ENCODE measurements at regions of chr5 and their contacts with region 1.

Region 1: GRCh38 chr5:39256477-39257235 is 37.3 kb upstream of the FYB1 start:
- DNase-seq: peak; percentile 89 to 96 (median 94)
- H3K4me3 ChIP-seq: peak overlapping the region in 2 of 3 experiments; percentile 66 to 70
- H3K4me3 Mint-ChIP-seq: peak overlapping the region in 1 of 2 donors; percentile 80
- H3K27ac ChIP-seq: peak overlapping the region; percentile 36 to 93
- H3K27ac Mint-ChIP-seq: peak overlapping the region; percentile 93 to 99 (median 95)
- H3K4me1 ChIP-seq: peaks cover 50 to 74% of the 10 kb centered on the region in 2 donors
- H3K4me1 Mint-ChIP-seq: peaks cover 74% of the 10 kb centered on the region
- H3K27me3 ChIP-seq: no peaks in the 10 kb centered on the region
- H3K27me3 Mint-ChIP-seq: no peaks in the 10 kb centered on the region
- CTCF ChIP-seq: no peak

Region 2: DNA sequence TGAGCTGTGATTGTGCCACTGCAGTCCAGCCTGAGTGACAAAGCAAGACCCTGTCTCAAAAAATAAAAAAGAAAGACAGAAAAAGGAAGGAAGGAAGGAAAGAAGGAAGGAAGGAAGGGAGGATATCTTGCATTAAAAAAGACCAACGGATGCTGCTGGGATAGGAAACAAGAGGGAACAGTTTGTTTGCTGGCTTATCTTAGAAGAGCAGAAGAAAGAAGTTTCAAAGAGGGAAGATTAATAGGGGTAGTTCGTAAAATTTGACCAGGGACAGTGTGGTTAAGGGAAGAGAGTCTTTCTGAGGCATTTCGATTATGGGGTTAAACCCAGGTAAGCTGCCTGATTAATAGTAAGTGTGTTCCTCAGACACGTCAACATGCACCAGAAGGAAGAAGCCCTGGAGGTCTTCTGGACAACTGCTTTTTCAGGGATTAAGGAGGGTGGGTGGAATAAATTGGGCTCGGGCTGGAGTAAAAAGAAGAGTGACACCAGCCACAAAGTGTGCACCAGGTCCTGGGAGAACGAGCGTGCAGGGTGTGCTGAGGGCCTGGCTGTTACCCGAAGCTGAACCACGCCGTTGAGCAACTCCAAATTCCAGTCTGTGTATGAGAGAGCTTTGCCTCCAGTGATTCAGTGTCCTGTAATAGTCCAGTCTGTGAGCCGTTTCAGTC is 62.1 kb before region 1 on chr5:
- intact Hi-C with region 1: no loop called
- DNase-seq: no peak
- H3K4me3 ChIP-seq: no peak overlapping the region
- H3K4me3 Mint-ChIP-seq: peak overlapping the region in 1 of 2 donors; percentile 18
- H3K27ac ChIP-seq: peak overlapping the region in 1 of 2 donors; percentile 63
- H3K27ac Mint-ChIP-seq: peak overlapping the region; percentile 37 to 92 (median 80)
- H3K4me1 ChIP-seq: peaks cover 74 to 86% of the 10 kb centered on the region in 2 donors
- H3K4me1 Mint-ChIP-seq: peaks cover 87% of the 10 kb centered on the region
- H3K27me3 ChIP-seq: no peaks in the 10 kb centered on the region
- H3K27me3 Mint-ChIP-seq: peaks cover 0 to 2% (median 0%) of the 10 kb centered on the region in 3 donors
- CTCF ChIP-seq: no peak

Region 3: DNA sequence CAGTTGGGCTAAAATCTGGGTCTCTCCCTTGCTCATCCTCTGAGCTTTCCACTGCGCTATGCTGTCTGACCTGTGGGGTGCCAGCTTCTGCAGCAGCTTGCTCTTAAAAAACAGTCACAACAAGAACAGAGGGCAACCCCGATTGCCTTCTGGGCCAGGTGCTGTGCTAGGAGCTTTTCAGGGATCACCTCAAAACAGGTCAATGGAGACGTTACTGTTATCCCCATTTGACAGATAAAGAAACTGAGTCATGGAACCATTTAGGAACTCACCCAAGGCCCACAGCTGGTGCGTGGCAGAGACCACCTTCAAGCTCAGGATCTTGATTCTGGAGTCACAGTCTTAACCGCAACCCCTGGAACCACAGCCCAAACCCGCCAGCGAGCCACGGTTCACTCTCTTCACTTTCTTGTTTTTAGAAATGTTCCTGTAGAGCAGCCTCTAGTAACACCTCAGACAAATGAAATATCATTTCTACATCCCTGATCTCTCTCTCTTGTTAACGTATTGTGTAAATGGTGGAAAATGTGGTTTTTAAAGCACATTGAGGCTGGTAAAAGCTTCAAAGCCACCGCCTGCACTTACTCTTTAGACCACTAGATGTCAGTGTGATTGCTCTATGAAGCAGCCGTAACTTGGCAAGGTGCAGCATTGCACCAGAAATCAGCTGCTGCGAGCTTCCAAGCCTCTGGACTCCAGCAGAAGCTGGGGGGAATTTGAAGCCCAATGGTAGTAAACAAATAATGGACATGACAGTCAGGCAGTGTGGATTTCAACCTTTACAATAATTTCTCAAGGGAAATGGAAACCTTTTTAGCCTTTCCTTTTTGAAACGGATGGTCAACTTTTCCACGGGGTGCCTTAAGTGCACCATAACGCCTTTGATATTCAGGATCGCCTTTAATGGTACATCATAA is 39.0 kb before region 1 on chr5:
- intact Hi-C with region 1: loop called (anchors 5 kb)
- DNase-seq: peak; percentile 60 to 83 (median 72)
- H3K4me3 ChIP-seq: peak overlapping the region; percentile 69 to 88 (median 81)
- H3K4me3 Mint-ChIP-seq: peak overlapping the region; percentile 77 to 98
- H3K27ac ChIP-seq: peak overlapping the region in 1 of 2 donors; percentile 86
- H3K27ac Mint-ChIP-seq: peak overlapping the region; percentile 29 to 91 (median 82)
- H3K4me1 ChIP-seq: peaks cover 85 to 87% of the 10 kb centered on the region in 2 donors
- H3K4me1 Mint-ChIP-seq: peaks cover 81% of the 10 kb centered on the region
- H3K27me3 ChIP-seq: no peaks in the 10 kb centered on the region
- H3K27me3 Mint-ChIP-seq: peaks cover 0 to 1% (median 0%) of the 10 kb centered on the region in 3 donors
- CTCF ChIP-seq: peak; percentile 98

Region 4: GRCh38 chr5:39224196-39224761 is 32.4 kb before region 1 on chr5:
- intact Hi-C with region 1: loop called (anchors 5 kb)
- DNase-seq: peak; percentile 55 to 71 (median 58)
- H3K4me3 ChIP-seq: peak overlapping the region; percentile 12 to 57 (median 16)
- H3K4me3 Mint-ChIP-seq: peak overlapping the region; percentile 39 to 67
- H3K27ac ChIP-seq: peak overlapping the region; percentile 81 to 86
- H3K27ac Mint-ChIP-seq: peak overlapping the region; percentile 83 to 94 (median 93)
- H3K4me1 ChIP-seq: peaks cover 82 to 89% of the 10 kb centered on the region in 2 donors
- H3K4me1 Mint-ChIP-seq: peaks cover 81% of the 10 kb centered on the region
- H3K27me3 ChIP-seq: no peaks in the 10 kb centered on the region
- H3K27me3 Mint-ChIP-seq: no peaks in the 10 kb centered on the region
- CTCF ChIP-seq: no peak

Region 5: GRCh38 chr5:39274398-39275085 is 17.9 kb after region 1 on chr5:
- intact Hi-C with region 1: loop called in 1 of 2 experiments (anchors 2 kb)
- DNase-seq: peak; percentile 57 to 81 (median 79)
- H3K4me3 ChIP-seq: peak overlapping the region; percentile 41 to 78 (median 72)
- H3K4me3 Mint-ChIP-seq: peak overlapping the region; percentile 63 to 86
- H3K27ac ChIP-seq: peak overlapping the region; percentile 77 to 84
- H3K27ac Mint-ChIP-seq: peak overlapping the region; percentile 90 to 99 (median 94)
- H3K4me1 ChIP-seq: peaks cover 53 to 63% of the 10 kb centered on the region in 2 donors
- H3K4me1 Mint-ChIP-seq: peaks cover 53% of the 10 kb centered on the region
- H3K27me3 ChIP-seq: no peaks in the 10 kb centered on the region
- H3K27me3 Mint-ChIP-seq: no peaks in the 10 kb centered on the region
- CTCF ChIP-seq: no peak